ENCODE measurements at regions of chr13 and their contacts with region 1.

Region 1: DNA sequence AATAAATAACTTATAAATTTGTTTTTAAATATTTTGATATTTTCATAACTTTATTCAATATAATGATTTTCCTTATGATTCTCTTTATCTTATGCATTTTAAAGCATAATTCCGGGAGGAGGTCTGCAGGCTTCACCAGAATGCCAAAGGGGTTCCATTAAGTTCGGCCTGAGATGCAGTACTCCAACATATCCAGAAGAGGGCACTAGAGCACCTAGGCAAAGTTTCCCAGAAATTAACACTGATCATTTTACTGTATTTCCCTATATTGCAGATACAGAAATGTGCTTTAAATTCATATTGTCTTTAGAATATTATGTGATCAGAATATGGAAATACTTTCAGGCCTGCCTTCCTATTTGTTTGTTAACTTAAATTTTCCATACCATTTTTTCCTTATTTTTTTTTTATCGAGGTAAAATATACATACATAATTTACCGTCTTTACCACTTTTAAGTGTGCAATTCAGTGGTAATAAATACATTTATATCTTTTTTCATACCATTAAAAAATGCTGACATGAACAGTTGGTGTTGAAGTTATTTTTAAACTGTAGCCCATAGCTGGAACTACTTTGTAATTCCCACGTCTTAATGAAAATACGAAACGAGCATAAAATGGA is 58.9 kb upstream of the TM9SF2 start:
- DNase-seq: peak; percentile 55
- CTCF ChIP-seq: peak; percentile 84

Region 2: DNA sequence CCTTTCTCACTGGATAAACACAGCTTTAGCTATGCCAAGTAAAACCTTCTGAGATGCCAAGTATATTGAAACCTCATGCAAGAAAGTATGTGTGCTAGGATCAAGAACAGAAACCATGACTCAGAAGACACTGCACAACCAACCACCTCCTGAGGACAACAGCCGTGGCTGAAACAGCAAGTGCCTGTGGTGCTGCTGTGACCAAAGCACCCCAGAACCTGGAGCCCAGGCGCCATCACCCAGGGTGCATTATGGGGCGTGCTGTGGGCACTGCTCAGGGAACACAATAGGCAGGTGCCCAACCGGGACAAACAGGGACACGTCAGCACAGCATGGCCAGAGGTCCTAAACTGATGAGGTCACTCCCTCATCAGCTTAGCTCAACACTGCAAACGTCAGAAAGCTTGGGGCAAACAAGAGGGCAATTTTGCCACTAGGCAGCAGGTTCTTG is 588.6 kb before region 1 on chr13:
- CTCF ChIA-PET with region 1: no interaction called
- POLR2A ChIA-PET with region 1: no interaction called
- DNase-seq: peak; percentile 56
- CTCF ChIP-seq: no peak

Region 3: DNA sequence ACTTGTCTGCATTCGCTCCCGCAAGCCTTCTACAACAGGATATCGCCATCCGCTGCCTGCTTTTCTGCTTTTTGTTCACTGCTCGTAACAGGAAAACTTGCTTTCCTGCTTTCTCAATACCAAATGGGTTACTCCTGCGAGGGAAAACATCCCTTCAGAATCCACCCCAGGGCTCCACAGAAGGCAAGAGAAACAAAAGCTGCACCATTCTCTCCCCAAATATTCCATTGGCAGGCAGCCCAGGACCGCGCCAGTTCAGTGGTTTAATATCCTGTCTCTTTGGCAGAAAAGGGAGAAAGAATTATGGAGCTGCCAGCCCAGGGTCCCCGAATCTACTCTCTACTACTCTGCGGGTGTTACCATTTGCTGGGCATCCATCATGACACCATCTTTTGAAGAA is 379.8 kb before region 1 on chr13:
- CTCF ChIA-PET with region 1: no interaction called
- POLR2A ChIA-PET with region 1: no interaction called
- DNase-seq: no peak
- CTCF ChIP-seq: no peak

Region 4: GRCh38 chr13:100442095-100442832 is 999.9 kb after region 1 on chr13:
- CTCF ChIA-PET with region 1: no interaction called
- POLR2A ChIA-PET with region 1: interaction called, 11 read pairs
- DNase-seq: no peak
- CTCF ChIP-seq: no peak